ENCODE measurements at regions of chr19 and their contacts with region 1.

Region 1: DNA sequence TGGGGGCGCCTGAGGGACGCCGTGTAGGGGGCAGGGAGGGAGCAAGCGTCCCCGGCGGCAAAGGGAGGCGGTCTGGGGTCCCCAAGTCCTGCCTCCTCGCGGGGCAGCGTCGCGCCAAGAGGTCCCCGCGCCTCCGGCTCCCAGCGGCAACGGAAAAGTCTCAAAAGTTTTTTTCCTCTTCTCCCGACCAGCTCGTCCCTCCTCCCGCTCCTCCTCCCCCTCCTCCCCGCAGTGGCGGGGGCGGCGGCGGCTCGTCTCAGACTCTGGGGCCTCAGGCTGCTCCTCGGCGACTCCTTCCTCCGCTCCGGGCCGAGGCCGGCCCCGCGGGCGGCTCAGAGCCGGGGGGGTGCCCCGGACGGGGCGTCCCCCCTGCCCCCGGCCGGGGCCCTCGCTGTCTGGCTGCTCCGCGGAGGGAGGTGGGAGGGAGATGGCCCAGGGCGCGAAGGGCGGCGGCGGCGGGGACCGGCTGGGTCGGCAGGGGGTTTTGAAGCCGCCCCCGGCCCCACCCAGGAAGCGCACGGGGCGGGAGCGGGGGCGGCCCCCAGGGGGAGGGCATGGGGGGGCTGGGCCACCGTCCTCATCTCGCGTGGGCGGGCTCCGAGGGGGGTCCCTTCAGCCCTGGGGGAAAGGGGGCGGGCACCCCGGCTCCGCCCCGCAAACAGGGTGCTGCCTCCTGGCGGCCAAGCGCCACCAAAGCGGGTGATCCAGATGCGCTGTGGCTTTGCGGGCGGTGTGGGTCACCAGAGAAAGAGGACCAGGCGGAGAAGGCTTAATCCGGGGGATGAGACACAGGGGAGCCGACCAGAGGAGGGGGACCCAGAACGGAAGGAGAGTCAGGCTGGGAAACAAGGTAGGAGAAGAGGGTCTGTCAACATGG is at the start of gene TGFB1:
- DNase-seq: peak; percentile 62
- ATAC-seq: peak; percentile 64
- H3K4me3 ChIP-seq: peak within 1 kb of the TSS; percentile 89
- H3K27ac ChIP-seq: peak within 1 kb of the TSS; percentile 84
- H3K4me1 ChIP-seq: peaks cover 16% of the 10 kb centered on the region
- H3K27me3 ChIP-seq: no peaks in the 10 kb centered on the region
- CTCF ChIP-seq: peak; percentile 88 to 94 (median 93)
- EP300 ChIP-seq: peak in 1 of 2 experiments; percentile 27; a peak in 1 of 4 replicates
- POLR2A ChIP-seq: peak; percentile 90
- RAD21 ChIP-seq: peak; percentile 56
- polyA plus RNA-seq, gene TGFB1: 0.23 to 0.37 TPM

Region 2: GRCh38 chr19:41310033-41310758 is 43.5 kb before region 1 on chr19 and contains the start of gene CCDC97:
- CTCF ChIA-PET with region 1: interaction called, 20 read pairs
- POLR2A ChIA-PET with region 1: interaction called, 3 read pairs
- RAD21 ChIA-PET with region 1: interaction called, 9 read pairs
- SMC1A ChIA-PET with region 1: interaction called, 12 read pairs
- in situ Hi-C with region 1: no loop called
- intact Hi-C with region 1: loop called (anchors 5 kb)
- DNase-seq: peak; percentile 68
- ATAC-seq: peak; percentile 81
- H3K4me3 ChIP-seq: peak within 1 kb of the TSS; percentile 98
- H3K27ac ChIP-seq: peak within 1 kb of the TSS; percentile 97
- H3K4me1 ChIP-seq: peaks cover 35% of the 10 kb centered on the region
- H3K27me3 ChIP-seq: no peaks in the 10 kb centered on the region
- CTCF ChIP-seq: no peak
- EP300 ChIP-seq: peak in 1 of 2 experiments; percentile 46; a peak in 1 of 4 replicates
- POLR2A ChIP-seq: peak; percentile 93
- RAD21 ChIP-seq: no peak
- polyA plus RNA-seq, gene CCDC97: 1.8 to 2.4 TPM

Region 3: DNA sequence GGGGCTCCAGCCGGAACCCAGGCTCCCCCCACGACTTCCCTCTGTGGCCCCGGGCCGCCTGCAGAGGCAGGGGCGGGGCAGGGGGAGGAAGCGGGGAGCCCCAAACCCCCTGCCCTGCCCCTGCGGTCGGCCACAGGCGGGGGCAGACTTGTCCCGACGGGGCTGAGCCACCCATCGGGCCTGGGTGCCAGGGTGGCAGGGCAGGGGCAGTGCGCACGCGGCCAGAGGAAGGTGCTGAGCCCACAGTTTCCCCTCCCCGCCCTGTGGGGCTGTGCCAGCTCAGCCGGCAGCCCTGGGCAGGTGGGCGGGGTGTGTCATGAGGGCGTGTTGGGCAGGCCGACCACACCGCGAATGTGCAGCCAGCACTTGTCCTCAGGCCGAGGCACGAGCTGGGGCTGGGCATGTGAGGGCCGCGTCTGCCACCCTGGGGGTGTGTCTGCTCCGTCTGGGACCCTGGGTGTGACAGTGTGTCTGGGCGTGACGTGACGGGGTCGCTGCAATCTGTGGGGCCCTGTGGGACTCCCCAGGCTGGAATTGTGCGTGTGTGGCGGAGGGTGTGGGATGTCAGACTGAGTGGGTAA is 26.0 kb before region 1 on chr19:
- CTCF ChIA-PET with region 1: interaction called, 8 read pairs
- POLR2A ChIA-PET with region 1: interaction called, 4 read pairs
- RAD21 ChIA-PET with region 1: interaction called, 26 read pairs
- SMC1A ChIA-PET with region 1: interaction called, 4 read pairs
- in situ Hi-C with region 1: no loop called
- intact Hi-C with region 1: loop called (anchors 2 kb)
- DNase-seq: no peak
- ATAC-seq: peak; percentile 86
- H3K4me3 ChIP-seq: peak overlapping the region; percentile 77
- H3K27ac ChIP-seq: peak overlapping the region; percentile 93
- H3K4me1 ChIP-seq: peaks cover 37% of the 10 kb centered on the region
- H3K27me3 ChIP-seq: no peaks in the 10 kb centered on the region
- CTCF ChIP-seq: no peak
- EP300 ChIP-seq: no peak
- POLR2A ChIP-seq: peak; percentile 78
- RAD21 ChIP-seq: no peak

Region 4: GRCh38 chr19:41363753-41364523 is 10.2 kb after region 1 on chr19 and contains the start of gene B9D2:
- CTCF ChIA-PET with region 1: interaction called, 91 read pairs
- POLR2A ChIA-PET with region 1: interaction called, 46 read pairs
- RAD21 ChIA-PET with region 1: interaction called, 41 read pairs
- SMC1A ChIA-PET with region 1: interaction called, 12 read pairs
- in situ Hi-C with region 1: no loop called
- intact Hi-C with region 1: no loop called
- DNase-seq: peak; percentile 94
- ATAC-seq: peak; percentile 93
- H3K4me3 ChIP-seq: peak within 1 kb of the TSS; percentile 92
- H3K27ac ChIP-seq: peak within 1 kb of the TSS; percentile 94
- H3K4me1 ChIP-seq: peaks cover 28% of the 10 kb centered on the region
- H3K27me3 ChIP-seq: no peaks in the 10 kb centered on the region
- CTCF ChIP-seq: no peak
- EP300 ChIP-seq: no peak
- POLR2A ChIP-seq: peak; percentile 93
- RAD21 ChIP-seq: no peak
- polyA plus RNA-seq, gene B9D2: 2.5 to 5.0 TPM

Region 5: DNA sequence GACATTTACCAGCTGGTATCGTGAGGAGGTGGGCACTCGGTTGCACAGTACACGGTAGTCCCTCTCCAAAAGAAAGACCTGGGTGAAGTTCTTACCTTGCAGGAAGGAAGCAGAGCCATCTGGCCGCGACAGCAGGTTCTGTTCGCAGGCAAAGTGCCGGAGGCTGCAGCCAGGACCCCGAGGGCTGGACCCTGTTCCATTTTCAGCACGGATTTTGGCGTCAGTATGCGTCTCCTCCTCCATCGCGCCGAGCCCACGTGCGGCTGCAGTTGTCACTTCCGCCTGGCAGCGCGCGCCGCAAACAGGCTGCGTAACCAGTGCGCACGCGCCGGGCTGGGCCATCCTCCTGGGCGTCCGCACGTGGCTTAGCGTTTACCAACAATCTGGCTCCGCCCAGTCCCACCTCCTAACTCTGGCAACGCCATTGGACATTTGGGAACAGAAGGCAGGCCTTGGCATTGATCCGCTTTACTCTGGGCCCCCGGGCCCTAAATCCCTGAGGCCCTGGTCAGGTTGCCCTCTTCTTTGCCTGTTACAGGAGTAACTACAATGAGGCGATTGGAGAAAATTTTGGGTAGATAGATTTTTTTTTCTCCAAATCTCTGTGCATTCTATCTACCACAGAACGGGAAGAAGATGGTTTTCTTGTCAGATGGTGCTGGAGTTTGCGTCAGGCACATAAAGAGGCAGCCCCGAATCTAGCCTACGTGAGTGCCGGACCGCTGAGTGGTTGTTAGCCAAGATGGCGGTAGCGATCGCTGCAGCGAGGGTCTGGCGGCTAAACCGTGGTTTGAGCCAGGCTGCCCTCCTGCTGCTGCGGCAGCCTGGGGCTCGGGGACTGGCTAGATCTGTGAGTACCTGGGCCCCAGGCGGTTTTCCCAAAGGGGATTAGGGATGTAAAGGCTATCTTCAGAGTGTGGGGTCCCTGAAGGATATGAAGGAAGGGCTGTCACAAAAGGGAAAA is 43.7 kb after region 1 on chr19 and contains the starts of genes BCKDHA and EXOSC5:
- CTCF ChIA-PET with region 1: interaction called, 3 read pairs
- POLR2A ChIA-PET with region 1: interaction called, 9 read pairs
- RAD21 ChIA-PET with region 1: no interaction called
- SMC1A ChIA-PET with region 1: interaction called, 3 read pairs
- in situ Hi-C with region 1: no loop called
- intact Hi-C with region 1: loop called (anchors 1 kb)
- DNase-seq: peak; percentile 99
- ATAC-seq: peak; percentile 94
- H3K4me3 ChIP-seq: peak within 1 kb of the TSS; percentile 80
- H3K27ac ChIP-seq: peak within 1 kb of the TSS; percentile 99
- H3K4me1 ChIP-seq: peaks cover 21% of the 10 kb centered on the region
- H3K27me3 ChIP-seq: no peaks in the 10 kb centered on the region
- CTCF ChIP-seq: no peak
- EP300 ChIP-seq: no peak
- POLR2A ChIP-seq: peak; percentile 78
- RAD21 ChIP-seq: no peak
- polyA plus RNA-seq, gene BCKDHA: 9.9 to 28.7 TPM
- polyA plus RNA-seq, gene EXOSC5: 20.6 to 25.3 TPM

Region 6: DNA sequence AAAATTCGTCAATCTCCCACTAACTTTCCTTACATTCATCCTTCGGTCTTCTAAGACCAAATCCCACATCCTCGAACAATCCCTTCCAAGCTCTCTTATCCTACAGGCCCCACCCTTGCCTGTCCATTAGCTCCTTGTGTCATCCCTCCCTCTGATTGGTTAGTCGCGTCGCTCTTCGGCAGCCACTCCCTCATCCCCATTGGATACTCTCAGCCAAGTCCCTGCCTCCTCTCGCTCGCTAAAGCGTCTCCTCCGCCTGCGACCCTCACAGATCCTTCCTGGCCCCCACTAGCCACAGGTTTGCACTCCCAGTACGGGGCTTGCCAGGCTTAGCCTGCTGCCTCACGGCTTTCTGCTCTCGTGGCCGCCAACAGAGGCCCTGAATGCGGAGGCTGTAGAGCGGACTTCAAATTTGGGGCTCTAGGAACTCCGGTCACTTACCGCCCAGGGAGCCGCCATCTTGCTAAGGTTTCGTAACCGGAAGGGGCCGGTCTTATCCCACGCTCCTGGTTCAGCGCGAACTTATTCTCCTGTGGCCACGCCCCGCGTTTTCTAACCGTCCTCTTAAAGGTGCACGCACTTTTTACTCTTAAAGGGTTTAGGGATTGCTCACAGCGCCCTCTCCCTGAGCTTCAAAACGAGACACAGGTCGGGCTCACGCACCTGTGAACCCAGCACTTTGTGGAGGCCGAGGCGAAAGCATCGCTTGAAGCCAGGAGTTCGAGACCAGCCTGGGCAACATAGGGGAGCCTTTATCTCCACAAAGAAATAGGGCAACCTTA is 85.9 kb after region 1 on chr19 and contains the start of gene DMAC2:
- CTCF ChIA-PET with region 1: interaction called, 4 read pairs
- POLR2A ChIA-PET with region 1: interaction called, 5 read pairs
- RAD21 ChIA-PET with region 1: interaction called, 14 read pairs
- SMC1A ChIA-PET with region 1: no interaction called
- in situ Hi-C with region 1: no loop called
- intact Hi-C with region 1: no loop called
- DNase-seq: peak; percentile 89
- ATAC-seq: peak; percentile 98
- H3K4me3 ChIP-seq: peak within 1 kb of the TSS; percentile 92
- H3K27ac ChIP-seq: peak within 1 kb of the TSS; percentile 85
- H3K4me1 ChIP-seq: no peaks in the 10 kb centered on the region; the same call in 1 of the 2 replicates
- H3K27me3 ChIP-seq: no peaks in the 10 kb centered on the region
- CTCF ChIP-seq: peak; percentile 62 to 78 (median 69)
- EP300 ChIP-seq: no peak
- POLR2A ChIP-seq: peak; percentile 89
- RAD21 ChIP-seq: peak; percentile 41
- polyA plus RNA-seq, gene DMAC2: 10.8 to 14.8 TPM

Region 7: DNA sequence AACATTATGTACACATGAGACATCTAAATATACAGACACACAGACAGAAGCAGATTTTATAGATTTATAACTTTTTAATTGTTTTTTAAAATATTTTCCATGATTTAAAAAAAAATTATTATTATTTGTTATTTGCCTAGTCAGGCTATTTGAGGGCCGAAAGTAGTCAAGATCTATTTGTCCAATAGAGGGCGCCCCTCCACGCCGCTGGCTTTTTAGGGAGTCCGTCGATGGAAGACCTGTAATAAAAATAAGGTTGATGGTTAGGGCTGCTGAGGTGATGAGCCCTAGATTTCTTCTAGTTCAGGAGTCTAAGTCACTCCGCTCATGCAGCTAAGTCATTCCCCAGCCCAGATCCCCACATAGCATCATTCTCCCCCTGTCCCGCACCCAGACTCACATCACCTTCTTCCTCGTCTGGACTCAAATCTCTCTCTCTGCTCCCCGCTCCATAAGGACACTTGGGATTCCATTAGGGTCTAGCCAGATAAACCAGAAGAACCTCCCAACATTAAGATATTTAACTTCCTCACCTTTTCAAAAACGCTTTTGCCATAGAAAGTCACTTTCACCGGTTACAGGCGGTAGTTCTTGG is 188.4 kb after region 1 on chr19:
- CTCF ChIA-PET with region 1: no interaction called
- POLR2A ChIA-PET with region 1: no interaction called
- RAD21 ChIA-PET with region 1: no interaction called
- SMC1A ChIA-PET with region 1: no interaction called
- in situ Hi-C with region 1: no loop called
- intact Hi-C with region 1: loop called (anchors 5 kb)
- DNase-seq: no peak
- ATAC-seq: peak; percentile 49; the same call in 2 of the 3 replicates
- H3K4me3 ChIP-seq: no peak overlapping the region
- H3K27ac ChIP-seq: no peak overlapping the region
- H3K4me1 ChIP-seq: peaks cover 26% of the 10 kb centered on the region
- H3K27me3 ChIP-seq: no peaks in the 10 kb centered on the region
- CTCF ChIP-seq: peak; percentile 69 to 74 (median 71)
- EP300 ChIP-seq: no peak
- POLR2A ChIP-seq: no peak
- RAD21 ChIP-seq: peak; percentile 85